ENCODE measurements at regions of chr17 and their contacts with region 1.

Region 1: GRCh38 chr17:43755389-43755875 is 3.2 kb downstream of the SOST start:
- DNase-seq: peak in 2 of 6 donors; percentile 63 to 68
- ATAC-seq: peak in 3 of 4 donors; percentile 10 to 72 (median 60)
- H3K4me3 ChIP-seq: peak overlapping the region in 1 of 4 donors; percentile 7
- H3K27ac ChIP-seq: no peak overlapping the region
- H3K4me1 ChIP-seq: no peaks in the 10 kb centered on the region
- H3K27me3 ChIP-seq: peaks cover 0 to 7% (median 0%) of the 10 kb centered on the region in 4 donors
- CTCF ChIP-seq: no peak

Region 2: DNA sequence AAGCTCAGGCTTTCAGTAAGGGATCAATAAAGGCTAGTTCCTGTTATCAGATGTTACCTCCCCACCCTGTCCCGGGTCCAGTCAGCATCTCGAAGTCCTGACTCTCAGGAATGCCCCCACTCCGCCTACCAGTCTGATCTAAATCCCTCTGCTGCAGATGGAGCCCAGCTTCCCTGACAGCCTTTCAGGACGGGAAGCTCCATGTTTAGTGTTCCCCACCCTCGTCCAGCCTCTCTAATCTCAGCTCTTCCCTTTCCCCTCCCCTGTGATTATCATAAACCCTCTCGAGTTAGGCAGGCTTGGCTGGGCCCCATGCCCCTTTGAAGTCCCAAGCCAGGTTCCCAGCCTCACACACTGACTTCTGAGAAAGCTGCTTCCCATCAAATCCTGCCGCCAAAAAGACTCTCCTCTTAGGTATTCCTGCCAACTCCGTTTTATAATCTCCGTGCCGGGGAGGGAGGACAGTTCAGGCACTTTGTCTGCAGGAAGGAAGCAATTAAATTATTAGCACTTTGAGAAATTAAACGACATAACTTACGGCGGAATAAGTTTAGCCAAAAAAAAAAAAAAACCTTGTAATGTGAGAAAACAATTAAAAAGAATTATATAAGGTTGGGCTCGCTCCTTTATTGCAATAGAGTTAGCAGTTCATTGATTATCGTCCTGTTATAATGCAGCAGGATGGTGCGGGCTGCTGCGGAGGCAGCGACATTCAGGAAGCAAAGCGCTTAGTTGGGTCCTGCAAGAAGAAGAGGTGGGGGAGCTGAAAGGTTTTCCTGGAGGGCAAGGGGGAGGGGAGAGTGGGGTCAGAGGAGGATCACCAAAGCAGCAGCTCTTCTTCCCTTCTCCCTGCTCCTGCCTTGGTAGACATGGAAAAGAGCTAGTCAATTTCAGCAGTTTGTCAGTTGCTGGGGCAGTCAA is 192.5 kb before region 1 on chr17:
- intact Hi-C with region 1: loop called in 1 of 3 experiments (anchors 10 kb)
- DNase-seq: no peak
- ATAC-seq: no peak
- H3K4me3 ChIP-seq: no peak overlapping the region
- H3K27ac ChIP-seq: no peak overlapping the region
- H3K4me1 ChIP-seq: no peaks in the 10 kb centered on the region
- H3K27me3 ChIP-seq: no peaks in the 10 kb centered on the region
- CTCF ChIP-seq: no peak

Region 3: GRCh38 chr17:43599835-43600234 is 155.6 kb before region 1 on chr17:
- intact Hi-C with region 1: no loop called
- DNase-seq: no peak
- ATAC-seq: peak in 1 of 4 donors; percentile 49
- H3K4me3 ChIP-seq: no peak overlapping the region
- H3K27ac ChIP-seq: no peak overlapping the region
- H3K4me1 ChIP-seq: no peaks in the 10 kb centered on the region
- H3K27me3 ChIP-seq: no peaks in the 10 kb centered on the region
- CTCF ChIP-seq: no peak

Region 4: DNA sequence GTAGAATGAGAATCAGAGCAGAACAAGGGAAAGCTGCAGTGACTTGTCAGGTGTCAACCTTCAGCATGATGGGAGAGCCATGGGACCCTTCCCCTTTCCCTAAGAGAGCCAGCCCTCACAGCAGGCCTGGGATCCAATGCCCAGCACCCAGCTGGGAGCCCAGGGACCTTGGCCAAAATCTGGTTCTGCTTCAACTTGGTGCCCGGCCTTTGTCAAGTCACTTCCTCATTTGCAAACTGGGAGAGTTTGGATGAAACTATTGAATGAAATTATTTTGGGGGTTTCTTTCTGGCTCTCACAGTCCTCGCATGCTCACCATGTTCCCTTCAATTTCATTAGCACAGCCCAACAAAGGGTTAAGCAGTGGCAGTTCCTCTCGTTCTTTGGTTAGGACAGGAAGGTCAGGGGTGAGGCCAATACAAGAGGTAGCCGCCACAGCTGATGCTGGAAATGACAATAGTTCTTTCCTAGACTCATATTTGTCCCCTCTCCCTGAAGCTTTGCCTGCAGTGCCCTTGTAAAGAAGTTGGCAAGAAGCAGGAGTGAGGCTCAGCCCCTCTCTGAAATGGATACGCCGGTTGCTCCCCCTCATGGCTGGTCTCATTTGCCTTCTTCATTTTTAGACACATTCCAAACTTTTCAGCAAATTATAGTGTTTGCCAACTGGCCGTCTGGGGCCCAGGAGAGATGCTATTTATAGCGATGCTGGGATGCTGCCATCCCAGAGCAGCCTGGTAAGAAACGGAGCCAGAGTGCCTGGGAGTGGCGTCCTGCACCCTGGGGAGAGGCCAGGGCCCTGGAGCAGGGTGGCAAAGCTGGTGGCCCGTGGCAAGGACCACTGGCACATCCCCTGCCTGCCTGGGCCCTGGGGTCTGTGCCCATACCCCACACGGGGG is 59.2 kb before region 1 on chr17:
- intact Hi-C with region 1: loop called (anchors 2 to 5 kb)
- DNase-seq: no peak
- ATAC-seq: no peak
- H3K4me3 ChIP-seq: no peak overlapping the region
- H3K27ac ChIP-seq: no peak overlapping the region
- H3K4me1 ChIP-seq: no peaks in the 10 kb centered on the region
- H3K27me3 ChIP-seq: no peaks in the 10 kb centered on the region
- CTCF ChIP-seq: no peak

Region 5: DNA sequence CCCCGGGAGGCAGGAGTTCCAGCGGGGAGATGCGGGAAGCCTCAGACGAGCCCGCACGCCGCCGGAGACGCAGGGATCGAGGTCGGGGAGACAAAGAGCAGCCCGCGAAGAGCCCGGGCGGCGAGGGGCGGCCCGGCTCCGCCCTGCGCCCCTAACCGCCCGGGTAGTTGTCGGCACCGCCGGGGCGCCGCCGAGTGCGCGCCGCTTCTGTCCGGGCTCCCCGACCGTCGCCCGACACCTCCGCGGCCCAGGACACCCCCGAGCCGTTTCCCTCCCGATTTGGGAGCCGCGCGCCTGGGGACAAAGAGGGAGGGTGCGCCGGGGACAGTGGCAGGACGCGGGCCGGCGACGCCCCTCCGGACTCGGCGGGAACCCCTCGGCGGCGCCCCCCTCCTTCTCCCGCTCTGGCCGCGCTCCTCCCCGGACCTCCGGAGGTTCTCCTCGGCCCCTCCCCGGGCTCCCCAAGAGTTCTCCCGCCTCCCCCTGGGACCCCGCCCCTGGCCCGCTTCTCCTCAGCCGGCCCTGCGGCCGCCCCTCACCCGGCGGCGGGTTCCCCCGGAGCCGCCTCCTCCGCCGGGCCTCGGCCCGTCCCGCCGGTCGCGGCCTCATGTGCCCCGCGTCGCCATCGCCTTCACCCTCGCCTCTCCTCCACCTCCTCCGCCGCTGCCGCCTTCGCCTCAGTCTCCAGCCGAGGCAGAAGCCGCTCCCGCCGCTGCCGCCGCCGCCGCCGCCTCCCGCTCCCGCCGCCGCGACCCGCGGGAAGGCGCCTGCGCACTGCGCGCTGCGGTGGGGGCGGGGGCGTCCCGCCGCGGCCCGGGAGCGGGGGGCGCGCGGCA is 1074.3 kb after region 1 on chr17 and contains the start of gene GJC1:
- intact Hi-C with region 1: no loop called
- DNase-seq: peak in 2 of 6 donors; percentile 63 to 66
- ATAC-seq: peak in 3 of 4 donors; percentile 12 to 76 (median 50)
- H3K4me3 ChIP-seq: peak within 1 kb of the TSS; percentile 10 to 56 (median 34)
- H3K27ac ChIP-seq: peak within 1 kb of the TSS in 1 of 4 donors; percentile 30
- H3K4me1 ChIP-seq: peaks cover 0 to 4% (median 0%) of the 10 kb centered on the region in 3 donors
- H3K27me3 ChIP-seq: peaks cover 4 to 56% (median 12%) of the 10 kb centered on the region in 4 donors
- CTCF ChIP-seq: no peak
- total RNA-seq, gene GJC1: 0.58 to 3.1 (median 1.1) TPM